CD8-positive, alpha-beta memory T cell (primary cell): ENCODE measurements at regions of chr1 and their contacts with region 1.

Region 1: DNA sequence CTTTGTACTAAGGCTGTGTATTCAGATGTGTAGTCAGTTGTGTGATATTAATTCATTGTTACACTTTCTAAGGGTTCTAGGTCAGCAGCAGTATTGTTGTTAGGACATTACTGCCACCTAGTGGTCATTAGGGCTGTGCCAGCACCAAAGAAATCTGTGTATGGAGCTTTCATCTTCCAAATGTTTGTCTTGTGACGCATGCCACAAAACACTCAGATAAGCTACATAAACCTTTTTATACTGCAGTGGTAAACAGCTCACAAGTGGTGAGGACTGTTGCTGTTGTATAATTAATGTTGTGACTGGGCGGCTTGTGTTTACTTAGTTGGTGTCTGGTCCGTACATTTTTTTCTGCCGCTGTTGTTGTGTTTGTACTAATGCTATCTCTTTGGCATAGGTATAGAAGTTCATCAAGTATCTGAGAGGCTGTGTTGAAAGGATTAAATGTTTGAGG is 51.7 kb downstream of the S1PR1 start:
- DNase-seq: peak; percentile 32 to 75 (median 69)
- H3K4me3 ChIP-seq: peak overlapping the region; percentile 10
- H3K4me3 Mint-ChIP-seq: peak overlapping the region in 3 of 7 donors; percentile 10 to 49 (median 21)
- H3K27ac ChIP-seq: no peak overlapping the region
- H3K27ac Mint-ChIP-seq: peak overlapping the region in 7 of 8 donors; percentile 4 to 87 (median 78)
- H3K4me1 ChIP-seq: peaks cover 76% of the 10 kb centered on the region
- H3K4me1 Mint-ChIP-seq: peaks cover 67 to 83% (median 82%) of the 10 kb centered on the region in 3 donors
- H3K27me3 ChIP-seq: no peaks in the 10 kb centered on the region
- H3K27me3 Mint-ChIP-seq: no peaks in the 10 kb centered on the region

Region 2: GRCh38 chr1:100928128-100928527 is 360.4 kb before region 1 on chr1:
- CTCF ChIA-PET with region 1: interaction called, 68 read pairs
- POLR2A ChIA-PET with region 1: interaction called, 4 read pairs
- DNase-seq: no peak
- H3K4me3 ChIP-seq: peak overlapping the region; percentile 36
- H3K4me3 Mint-ChIP-seq: no peak overlapping the region
- H3K27ac ChIP-seq: no peak overlapping the region
- H3K27ac Mint-ChIP-seq: no peak overlapping the region
- H3K4me1 ChIP-seq: peaks cover 85% of the 10 kb centered on the region
- H3K4me1 Mint-ChIP-seq: peaks cover 24 to 44% (median 33%) of the 10 kb centered on the region in 3 donors
- H3K27me3 ChIP-seq: no peaks in the 10 kb centered on the region
- H3K27me3 Mint-ChIP-seq: no peaks in the 10 kb centered on the region

Region 3: GRCh38 chr1:101221945-101222429 is 66.5 kb before region 1 on chr1:
- CTCF ChIA-PET with region 1: no interaction called
- POLR2A ChIA-PET with region 1: no interaction called
- DNase-seq: no peak
- H3K4me3 ChIP-seq: no peak overlapping the region
- H3K4me3 Mint-ChIP-seq: peak overlapping the region in 6 of 7 donors; percentile 44 to 84 (median 56)
- H3K27ac ChIP-seq: no peak overlapping the region
- H3K27ac Mint-ChIP-seq: peak overlapping the region in 6 of 8 donors; percentile 16 to 95 (median 49)
- H3K4me1 ChIP-seq: no peaks in the 10 kb centered on the region
- H3K4me1 Mint-ChIP-seq: peaks cover 11 to 17% (median 15%) of the 10 kb centered on the region in 3 donors
- H3K27me3 ChIP-seq: no peaks in the 10 kb centered on the region
- H3K27me3 Mint-ChIP-seq: peaks cover 0 to 1% of the 10 kb centered on the region in 2 donors

Region 4: DNA sequence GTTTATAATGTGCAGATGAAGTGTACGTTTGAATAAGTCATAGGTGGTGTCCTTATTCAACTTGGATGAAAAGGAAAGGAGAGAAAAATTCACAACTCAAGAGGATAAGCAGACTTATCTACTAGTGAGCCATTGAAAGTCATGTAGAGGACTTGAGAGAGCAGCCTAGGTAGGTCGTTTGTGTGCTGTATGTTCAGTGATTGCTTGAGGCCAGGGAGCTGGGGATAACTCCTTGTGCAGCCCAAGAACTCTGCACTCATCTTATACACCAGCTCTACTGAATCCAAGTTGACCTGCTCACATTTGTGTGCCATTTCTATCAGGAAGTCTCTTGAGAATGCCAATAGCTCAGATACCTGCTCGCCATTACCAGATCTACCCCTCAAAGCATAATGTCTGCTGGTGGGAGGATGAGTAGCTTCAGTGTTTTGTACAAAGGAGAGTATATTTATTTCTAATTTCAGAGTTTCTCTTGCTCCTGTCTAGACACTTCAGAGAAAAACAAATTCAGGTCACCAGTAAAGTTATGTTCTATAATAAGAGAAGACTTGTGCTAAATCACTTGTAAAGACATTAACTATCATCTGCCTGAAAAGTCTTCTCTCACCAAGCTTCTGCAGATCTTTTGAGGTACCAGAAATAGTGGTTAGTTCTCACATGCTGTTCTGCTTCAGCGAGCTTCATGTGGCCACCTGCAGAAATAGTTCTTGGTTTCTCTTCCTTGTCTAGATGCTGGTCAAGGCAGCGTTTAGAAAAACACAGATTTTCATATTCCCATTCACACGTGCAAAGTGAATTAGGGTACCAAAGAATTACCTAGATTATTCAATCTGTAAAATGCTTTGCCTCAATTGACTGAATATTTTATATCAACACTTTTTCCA is 40.9 kb before region 1 on chr1:
- CTCF ChIA-PET with region 1: interaction called, 214 read pairs
- POLR2A ChIA-PET with region 1: interaction called, 5 read pairs
- DNase-seq: no peak
- H3K4me3 ChIP-seq: peak overlapping the region; percentile 4
- H3K4me3 Mint-ChIP-seq: peak overlapping the region in 5 of 7 donors; percentile 7 to 43 (median 30)
- H3K27ac ChIP-seq: no peak overlapping the region
- H3K27ac Mint-ChIP-seq: peak overlapping the region; percentile 15 to 89 (median 56)
- H3K4me1 ChIP-seq: peaks cover 74% of the 10 kb centered on the region
- H3K4me1 Mint-ChIP-seq: peaks cover 58 to 79% (median 75%) of the 10 kb centered on the region in 3 donors
- H3K27me3 ChIP-seq: no peaks in the 10 kb centered on the region
- H3K27me3 Mint-ChIP-seq: no peaks in the 10 kb centered on the region

Region 5: DNA sequence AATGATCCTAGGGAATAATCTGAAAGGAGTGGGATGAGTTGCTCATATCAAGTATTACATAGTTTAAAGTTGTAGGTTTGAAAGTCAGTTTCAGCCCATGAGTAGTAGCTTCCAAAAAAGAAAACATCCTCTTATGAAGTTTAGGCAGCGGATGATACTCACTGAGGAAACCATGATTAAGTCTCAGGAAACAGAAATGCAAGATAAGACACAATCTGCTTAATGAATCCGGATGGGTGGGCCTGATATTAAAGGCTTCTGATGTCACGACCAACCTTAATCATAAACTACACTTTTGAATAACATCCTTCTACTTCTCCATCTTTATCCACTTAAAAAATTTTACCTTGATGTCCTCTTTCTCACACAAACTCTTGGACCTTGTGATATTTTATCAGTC is 10.1 kb after region 1 on chr1:
- CTCF ChIA-PET with region 1: interaction called, 11 read pairs
- POLR2A ChIA-PET with region 1: no interaction called
- DNase-seq: no peak
- H3K4me3 ChIP-seq: no peak overlapping the region
- H3K4me3 Mint-ChIP-seq: no peak overlapping the region
- H3K27ac ChIP-seq: no peak overlapping the region
- H3K27ac Mint-ChIP-seq: peak overlapping the region in 4 of 8 donors; percentile 3 to 90 (median 11)
- H3K4me1 ChIP-seq: peaks cover 2% of the 10 kb centered on the region
- H3K4me1 Mint-ChIP-seq: peaks cover 13 to 48% (median 30%) of the 10 kb centered on the region in 3 donors
- H3K27me3 ChIP-seq: no peaks in the 10 kb centered on the region
- H3K27me3 Mint-ChIP-seq: peaks cover 1 to 3% of the 10 kb centered on the region in 2 donors

Region 6: DNA sequence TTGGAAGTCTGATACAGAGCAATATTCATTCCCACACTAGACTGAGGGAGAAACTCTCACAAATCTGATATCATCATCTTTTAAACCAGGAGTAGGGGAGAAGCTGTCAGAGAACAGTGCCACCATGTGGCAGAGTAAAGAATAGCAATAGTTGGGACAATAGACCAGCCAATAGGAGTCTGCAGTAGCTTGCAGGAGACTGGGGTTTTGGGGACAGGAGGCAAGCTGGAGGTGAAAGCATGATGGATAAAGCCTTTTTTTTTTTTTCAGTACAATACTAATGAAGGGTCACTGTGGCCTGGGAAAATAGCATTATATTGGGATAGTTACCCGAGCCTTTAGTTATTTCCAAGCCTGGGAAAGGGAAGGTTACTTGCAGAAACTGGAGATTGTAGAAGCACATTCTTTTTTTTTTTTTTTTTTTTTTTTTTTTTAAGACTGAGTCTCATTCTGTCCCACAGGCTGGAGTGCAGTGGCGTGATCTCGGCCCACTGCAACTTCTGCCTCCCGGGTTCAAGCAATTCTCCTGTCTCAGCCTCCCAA is 69.0 kb after region 1 on chr1:
- CTCF ChIA-PET with region 1: interaction called, 15 read pairs
- POLR2A ChIA-PET with region 1: interaction called, 8 read pairs
- DNase-seq: peak; percentile 40 to 86 (median 74)
- H3K4me3 ChIP-seq: no peak overlapping the region
- H3K4me3 Mint-ChIP-seq: peak overlapping the region in 2 of 7 donors; percentile 13 to 74
- H3K27ac ChIP-seq: no peak overlapping the region
- H3K27ac Mint-ChIP-seq: peak overlapping the region in 7 of 8 donors; percentile 40 to 96 (median 72)
- H3K4me1 ChIP-seq: peaks cover 10% of the 10 kb centered on the region
- H3K4me1 Mint-ChIP-seq: peaks cover 10 to 17% (median 11%) of the 10 kb centered on the region in 3 donors
- H3K27me3 ChIP-seq: no peaks in the 10 kb centered on the region
- H3K27me3 Mint-ChIP-seq: peaks cover 0 to 3% of the 10 kb centered on the region in 2 donors